ENCODE measurements at regions of chr2 and their contacts with region 1.

Region 1: DNA sequence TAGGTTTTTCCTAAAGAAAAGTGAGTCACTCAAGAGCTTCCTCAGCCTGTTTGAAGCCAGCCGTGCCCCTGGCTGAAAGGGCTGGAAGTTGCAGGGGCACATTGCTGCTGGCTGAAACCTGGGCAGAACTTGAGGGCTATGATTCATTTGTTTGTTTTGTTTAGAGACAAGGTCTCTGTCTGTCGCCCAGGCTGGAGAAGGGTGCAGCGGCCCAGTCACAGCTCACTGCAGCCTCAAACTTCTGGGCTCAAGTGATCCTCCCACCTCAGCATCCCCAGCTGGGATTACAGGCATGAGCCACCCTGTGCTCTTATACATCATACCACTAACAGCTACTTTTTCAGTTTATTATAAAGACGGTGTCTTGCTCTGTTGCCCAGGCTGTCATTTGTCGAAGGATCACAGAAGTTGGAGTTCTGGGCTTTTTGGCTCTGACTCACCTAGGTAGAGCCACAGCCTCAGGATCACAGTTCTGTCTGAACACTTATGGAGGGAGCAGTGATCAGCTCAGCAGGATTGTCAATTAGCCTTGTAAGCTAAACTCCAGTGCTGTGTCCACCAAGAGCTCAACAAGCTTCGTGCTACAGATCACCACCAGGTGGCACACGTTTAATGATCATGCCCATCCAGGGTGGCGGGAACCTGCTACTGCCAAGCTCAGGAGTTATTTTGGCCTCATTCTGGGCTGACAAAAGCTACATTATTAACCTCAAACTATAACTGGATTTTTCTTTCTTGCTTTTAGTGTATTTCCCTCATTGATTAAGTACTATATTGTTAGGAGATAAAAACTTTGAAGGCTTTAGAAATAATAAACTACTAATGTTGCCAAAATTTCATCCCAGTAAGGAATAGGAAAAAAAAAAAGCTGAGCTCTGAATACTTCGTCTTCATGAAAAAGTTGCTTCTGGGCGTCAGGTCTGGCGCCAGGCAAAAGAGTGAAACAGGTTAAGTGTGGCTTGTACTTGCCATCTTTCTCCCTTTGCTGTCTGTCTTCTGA is 57.9 kb downstream of the ARHGEF33 start:
- DNase-seq: peak; percentile 91 to 95
- ATAC-seq: peak; percentile 95 to 98
- H3K4me3 ChIP-seq: no peak overlapping the region
- H3K27ac ChIP-seq: peak overlapping the region; percentile 23 to 70; a peak in 5 of 6 replicates
- H3K4me1 ChIP-seq: peaks cover 15% of the 10 kb centered on the region
- CTCF ChIP-seq: peak; percentile 92
- EP300 ChIP-seq: no peak
- POLR2A ChIP-seq: no peak
- RAD21 ChIP-seq: peak; percentile 76 to 84

Region 2: GRCh38 chr2:38653715-38654527 is 293.6 kb before region 1 on chr2:
- CTCF ChIA-PET with region 1: no interaction called
- POLR2A ChIA-PET with region 1: no interaction called
- DNase-seq: no peak
- ATAC-seq: peak in 1 of 2 experiments; percentile 25; a peak in 3 of 6 replicates
- H3K4me3 ChIP-seq: no peak overlapping the region
- H3K27ac ChIP-seq: no peak overlapping the region; a peak in 1 of 6 replicates
- H3K4me1 ChIP-seq: no peaks in the 10 kb centered on the region
- CTCF ChIP-seq: no peak
- EP300 ChIP-seq: no peak
- POLR2A ChIP-seq: no peak
- RAD21 ChIP-seq: no peak

Region 3: GRCh38 chr2:38925982-38926381 is 21.6 kb before region 1 on chr2:
- CTCF ChIA-PET with region 1: interaction called, 17 read pairs
- POLR2A ChIA-PET with region 1: no interaction called
- DNase-seq: no peak
- ATAC-seq: peak in 1 of 2 experiments; percentile 48; a peak in 1 of 6 replicates
- H3K4me3 ChIP-seq: no peak overlapping the region
- H3K27ac ChIP-seq: no peak overlapping the region
- H3K4me1 ChIP-seq: no peaks in the 10 kb centered on the region
- CTCF ChIP-seq: no peak
- EP300 ChIP-seq: no peak
- POLR2A ChIP-seq: no peak
- RAD21 ChIP-seq: no peak

Region 4: DNA sequence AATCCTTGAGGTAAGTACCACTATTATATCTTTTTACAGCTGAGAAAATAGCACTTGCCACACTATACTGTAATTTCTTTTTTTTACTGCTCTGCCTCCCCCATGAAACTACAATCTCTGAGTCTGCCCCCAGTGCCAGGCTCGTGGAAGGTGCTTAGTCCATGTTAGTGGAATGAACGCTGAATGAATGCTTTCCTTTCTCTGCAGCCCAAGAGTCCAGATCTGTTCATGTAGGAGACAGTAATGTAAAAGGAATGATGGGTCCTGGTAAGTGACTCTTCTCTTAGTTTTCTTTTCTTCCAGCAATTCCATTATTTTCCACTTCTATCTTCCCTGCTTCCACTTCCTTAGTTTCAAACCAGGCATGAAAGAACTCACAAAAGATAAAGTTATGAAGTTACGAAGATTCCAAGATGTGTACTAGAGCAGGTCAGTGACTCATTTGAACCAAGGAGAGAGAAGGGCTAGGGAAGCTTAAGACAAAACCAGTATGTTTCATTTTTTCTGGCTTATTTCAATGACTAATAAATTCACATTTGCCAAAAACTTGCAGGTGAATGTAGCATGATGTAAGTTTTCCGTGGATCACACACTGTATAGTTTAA is 11.9 kb before region 1 on chr2:
- CTCF ChIA-PET with region 1: interaction called, 50 read pairs
- POLR2A ChIA-PET with region 1: no interaction called
- DNase-seq: no peak
- ATAC-seq: peak in 1 of 2 experiments; percentile 55; a peak in 2 of 6 replicates
- H3K4me3 ChIP-seq: no peak overlapping the region
- H3K27ac ChIP-seq: no peak overlapping the region
- H3K4me1 ChIP-seq: no peaks in the 10 kb centered on the region
- CTCF ChIP-seq: no peak
- EP300 ChIP-seq: no peak
- POLR2A ChIP-seq: no peak
- RAD21 ChIP-seq: no peak

Region 5: GRCh38 chr2:38959938-38960608 is 12.5 kb after region 1 on chr2:
- CTCF ChIA-PET with region 1: interaction called, 21 read pairs
- POLR2A ChIA-PET with region 1: no interaction called
- DNase-seq: no peak
- ATAC-seq: no peak
- H3K4me3 ChIP-seq: no peak overlapping the region
- H3K27ac ChIP-seq: no peak overlapping the region
- H3K4me1 ChIP-seq: no peaks in the 10 kb centered on the region
- CTCF ChIP-seq: no peak
- EP300 ChIP-seq: no peak
- POLR2A ChIP-seq: no peak
- RAD21 ChIP-seq: no peak

Region 6: GRCh38 chr2:39008665-39009064 is 61.1 kb after region 1 on chr2:
- CTCF ChIA-PET with region 1: interaction called, 10 read pairs
- POLR2A ChIA-PET with region 1: no interaction called
- DNase-seq: no peak
- ATAC-seq: no peak
- H3K4me3 ChIP-seq: no peak overlapping the region
- H3K27ac ChIP-seq: no peak overlapping the region
- H3K4me1 ChIP-seq: no peaks in the 10 kb centered on the region
- CTCF ChIP-seq: no peak
- EP300 ChIP-seq: no peak
- POLR2A ChIP-seq: no peak
- RAD21 ChIP-seq: no peak

Region 7: GRCh38 chr2:39234754-39235153 is 287.2 kb after region 1 on chr2:
- CTCF ChIA-PET with region 1: interaction called, 97 read pairs
- POLR2A ChIA-PET with region 1: no interaction called
- DNase-seq: peak in 1 of 2 experiments; percentile 16
- ATAC-seq: no peak
- H3K4me3 ChIP-seq: no peak overlapping the region
- H3K27ac ChIP-seq: no peak overlapping the region
- H3K4me1 ChIP-seq: no peaks in the 10 kb centered on the region
- CTCF ChIP-seq: no peak
- EP300 ChIP-seq: no peak
- POLR2A ChIP-seq: no peak
- RAD21 ChIP-seq: no peak